Panc1 (cell line): ENCODE measurements at regions of chr18 and their contacts with region 1.

Region 1: GRCh38 chr18:48763719-48764100 is 187.1 kb downstream of the SMAD7 start:
- DNase-seq: no peak
- ATAC-seq: no peak
- H3K4me3 ChIP-seq: no peak overlapping the region
- H3K27ac ChIP-seq: no peak overlapping the region
- H3K4me1 ChIP-seq: no peaks in the 10 kb centered on the region
- H3K27me3 ChIP-seq: no peaks in the 10 kb centered on the region
- CTCF ChIP-seq: no peak

Region 2: GRCh38 chr18:48646976-48647375 is 116.7 kb before region 1 on chr18:
- CTCF ChIA-PET with region 1: interaction called, 10 read pairs
- POLR2A ChIA-PET with region 1: no interaction called
- in situ Hi-C with region 1: no loop called
- intact Hi-C with region 1: no loop called
- DNase-seq: no peak
- ATAC-seq: no peak
- H3K4me3 ChIP-seq: no peak overlapping the region
- H3K27ac ChIP-seq: no peak overlapping the region
- H3K4me1 ChIP-seq: no peaks in the 10 kb centered on the region
- H3K27me3 ChIP-seq: no peaks in the 10 kb centered on the region
- CTCF ChIP-seq: no peak